A549 (cell line): ENCODE measurements at regions of chr11 and their contacts with region 1.

Region 1: DNA sequence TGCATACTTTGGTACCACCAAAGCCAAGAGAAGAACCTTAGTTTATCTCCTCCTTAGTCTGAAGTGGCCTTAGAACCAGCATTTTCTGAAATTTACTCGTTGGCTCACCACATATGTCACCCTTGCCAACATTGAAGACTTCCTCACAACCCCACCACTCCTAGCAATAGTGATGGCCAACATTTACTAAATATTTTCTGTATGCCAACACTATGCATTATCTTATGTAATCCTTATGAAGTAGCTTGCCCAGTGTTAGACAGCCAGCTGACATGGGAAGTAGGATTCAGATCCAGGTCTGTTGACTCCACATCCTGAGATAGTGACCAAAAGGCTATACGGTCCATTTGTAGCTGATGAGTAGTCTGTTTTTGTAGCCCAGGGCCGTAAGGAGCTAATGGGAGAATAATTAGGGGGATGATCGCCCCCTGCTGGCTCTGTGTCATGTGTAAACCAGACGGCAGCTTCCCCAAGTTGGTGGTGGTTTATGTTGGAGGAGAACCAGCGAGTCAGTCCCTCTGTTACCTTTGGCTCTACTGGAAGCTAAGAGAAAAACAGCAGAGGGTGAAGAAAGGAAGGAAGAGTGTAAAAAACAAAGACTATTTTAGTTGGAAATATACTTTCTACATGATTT is 120.5 kb upstream of the RASSF10 start:
- DNase-seq: peak; percentile 64 to 77
- ATAC-seq: peak; percentile 70 to 81
- H3K4me3 ChIP-seq: no peak overlapping the region
- H3K27ac ChIP-seq: peak overlapping the region; percentile 20 to 30; a peak in 3 of 6 replicates
- H3K4me1 ChIP-seq: peaks cover 24% of the 10 kb centered on the region
- CTCF ChIP-seq: peak; percentile 86
- EP300 ChIP-seq: no peak
- POLR2A ChIP-seq: no peak
- RAD21 ChIP-seq: peak; percentile 88 to 89

Region 2: DNA sequence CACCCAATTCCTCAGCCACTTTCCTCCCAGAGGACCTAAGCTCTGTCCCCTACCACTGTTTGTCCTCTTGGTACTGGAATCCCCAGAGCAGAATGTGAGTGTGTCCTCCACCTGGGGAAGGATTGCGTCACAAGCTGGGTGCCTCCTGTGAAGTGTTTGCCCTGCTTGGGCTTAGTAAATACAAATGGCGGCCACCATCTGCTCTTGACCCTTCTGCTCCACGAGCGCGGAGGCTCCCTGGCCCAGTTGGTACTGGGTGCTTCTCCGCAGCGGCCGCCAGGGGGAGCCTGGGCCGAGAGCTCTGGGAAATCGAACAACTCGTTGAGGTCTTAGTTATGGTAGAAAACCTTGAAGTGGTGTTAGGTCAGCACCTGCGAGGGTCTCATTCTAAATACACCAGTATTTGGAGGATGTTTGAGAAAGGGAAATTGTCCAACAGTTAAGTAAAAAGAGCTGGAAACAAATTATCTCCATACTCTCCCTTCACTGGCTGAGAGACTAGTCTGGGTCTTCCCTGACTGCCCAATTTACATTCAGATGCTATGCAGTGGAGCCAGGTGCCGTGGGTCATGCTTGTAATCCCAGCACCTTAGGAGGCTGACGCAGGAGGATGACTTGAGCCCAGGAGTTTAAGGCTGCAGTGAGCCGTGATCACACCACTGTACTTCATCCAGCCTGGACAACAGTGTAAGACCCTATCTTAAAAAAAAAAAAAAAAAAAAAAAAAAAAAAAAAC is 289.1 kb before region 1 on chr11:
- CTCF ChIA-PET with region 1: interaction called, 13 read pairs
- POLR2A ChIA-PET with region 1: no interaction called
- DNase-seq: peak; percentile 41 to 69
- ATAC-seq: peak; percentile 96 to 99
- H3K4me3 ChIP-seq: no peak overlapping the region
- H3K27ac ChIP-seq: peak overlapping the region; percentile 29 to 63; a peak in 3 of 6 replicates
- H3K4me1 ChIP-seq: 0 out of 3 replicates have a peak, but pooled peaks cover 3% of the 10 kb centered on the region
- CTCF ChIP-seq: peak; percentile 80
- EP300 ChIP-seq: no peak
- POLR2A ChIP-seq: no peak
- RAD21 ChIP-seq: peak; percentile 80 to 81

Region 3: GRCh38 chr11:12693479-12694181 is 195.0 kb before region 1 on chr11:
- CTCF ChIA-PET with region 1: interaction called, 11 read pairs
- POLR2A ChIA-PET with region 1: no interaction called
- DNase-seq: peak; percentile 73 to 83
- ATAC-seq: peak; percentile 74 to 79
- H3K4me3 ChIP-seq: peak overlapping the region; percentile 31
- H3K27ac ChIP-seq: peak overlapping the region; percentile 92 to 94
- H3K4me1 ChIP-seq: peaks cover 93% of the 10 kb centered on the region
- CTCF ChIP-seq: no peak
- EP300 ChIP-seq: peak in 1 of 2 experiments; percentile 36; a peak in 1 of 5 replicates
- POLR2A ChIP-seq: 0 out of 2 replicates have a peak, but pooled peaks have one; percentile 14
- RAD21 ChIP-seq: peak in 1 of 2 experiments; percentile 15; a peak in 1 of 5 replicates

Region 4: DNA sequence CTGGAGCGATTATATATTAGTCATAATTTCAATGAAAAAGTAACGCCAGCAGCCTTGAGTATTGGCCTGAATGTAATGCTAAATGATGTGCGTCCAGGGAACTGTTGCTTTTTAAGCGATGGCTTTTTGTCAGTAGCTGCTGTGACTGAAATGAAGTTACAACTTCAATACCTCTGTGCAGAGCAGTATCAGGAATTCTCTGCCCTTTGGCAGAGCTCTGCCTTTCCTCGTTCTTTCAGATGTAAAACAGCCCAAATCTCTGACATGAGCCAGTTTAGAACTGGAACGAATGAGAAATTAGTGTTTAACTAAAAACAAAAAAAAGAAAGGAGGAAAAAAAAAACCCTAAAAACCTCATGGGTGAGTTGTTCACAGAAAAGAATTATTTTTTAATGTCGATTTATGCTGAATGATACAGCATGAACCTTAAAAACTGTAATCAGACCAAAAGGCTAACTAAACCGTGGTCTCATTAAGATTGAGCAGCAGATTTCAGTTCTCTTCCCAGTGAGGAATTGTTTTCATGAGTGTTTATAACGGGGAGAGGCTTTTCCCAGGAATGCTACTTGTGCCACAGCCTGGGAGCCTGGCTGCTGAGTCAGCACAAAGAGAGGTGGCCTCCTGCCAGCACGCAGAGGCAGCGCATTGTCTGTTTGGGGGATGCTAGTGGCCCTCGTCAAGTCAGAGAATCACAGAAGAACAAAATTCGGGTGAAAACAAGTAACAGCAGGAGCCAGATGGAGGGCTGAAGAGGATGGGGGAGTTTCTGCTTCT is 25.8 kb before region 1 on chr11:
- CTCF ChIA-PET with region 1: interaction called, 11 read pairs
- POLR2A ChIA-PET with region 1: no interaction called
- DNase-seq: peak in 1 of 2 experiments; percentile 26
- ATAC-seq: no peak
- H3K4me3 ChIP-seq: no peak overlapping the region
- H3K27ac ChIP-seq: no peak overlapping the region
- H3K4me1 ChIP-seq: peaks cover 40% of the 10 kb centered on the region
- CTCF ChIP-seq: no peak
- EP300 ChIP-seq: no peak
- POLR2A ChIP-seq: no peak
- RAD21 ChIP-seq: no peak

Region 5: DNA sequence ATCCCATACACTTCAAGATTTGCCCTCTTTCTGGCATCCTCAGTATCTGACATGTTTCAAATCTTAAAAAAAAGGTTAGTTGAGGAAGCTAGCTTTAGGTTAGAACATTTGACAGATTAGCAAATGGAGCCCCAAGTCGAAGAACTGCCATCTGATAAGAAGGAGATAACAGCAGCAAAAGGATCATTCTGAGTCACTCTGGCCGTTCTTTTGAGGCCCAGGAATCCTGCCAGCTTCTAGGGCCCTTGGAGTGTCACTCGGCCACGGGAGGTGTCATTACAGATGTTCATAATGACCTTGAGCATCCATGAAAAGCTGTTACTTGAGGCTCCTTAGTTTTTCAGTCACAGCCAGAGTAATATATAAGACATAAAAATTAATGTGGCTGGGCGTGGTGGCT is 11.7 kb before region 1 on chr11:
- CTCF ChIA-PET with region 1: interaction called, 17 read pairs
- POLR2A ChIA-PET with region 1: interaction called, 5 read pairs
- DNase-seq: no peak
- ATAC-seq: no peak
- H3K4me3 ChIP-seq: no peak overlapping the region
- H3K27ac ChIP-seq: no peak overlapping the region
- H3K4me1 ChIP-seq: peaks cover 8% of the 10 kb centered on the region
- CTCF ChIP-seq: no peak
- EP300 ChIP-seq: no peak
- POLR2A ChIP-seq: no peak
- RAD21 ChIP-seq: no peak

Region 6: GRCh38 chr11:13249996-13250395 is 361.4 kb after region 1 on chr11:
- CTCF ChIA-PET with region 1: no interaction called
- POLR2A ChIA-PET with region 1: no interaction called
- DNase-seq: peak in 1 of 2 experiments; percentile 27
- ATAC-seq: peak; percentile 75 to 82
- H3K4me3 ChIP-seq: no peak overlapping the region
- H3K27ac ChIP-seq: no peak overlapping the region
- H3K4me1 ChIP-seq: peaks cover 6% of the 10 kb centered on the region
- CTCF ChIP-seq: peak; percentile 52
- EP300 ChIP-seq: no peak
- POLR2A ChIP-seq: no peak
- RAD21 ChIP-seq: peak; percentile 66 to 70